Right ventricle myocardium inferior (tissue), 1 donor: ENCODE measurements at regions of chr19 and their contacts with region 1.

Region 1: GRCh38 chr19:53431399-53432087 is at the start of gene ZNF761:
- DNase-seq: peak; percentile 97
- ATAC-seq: peak; percentile 100
- total RNA-seq, gene ZNF761: 3.8 TPM

Region 2: DNA sequence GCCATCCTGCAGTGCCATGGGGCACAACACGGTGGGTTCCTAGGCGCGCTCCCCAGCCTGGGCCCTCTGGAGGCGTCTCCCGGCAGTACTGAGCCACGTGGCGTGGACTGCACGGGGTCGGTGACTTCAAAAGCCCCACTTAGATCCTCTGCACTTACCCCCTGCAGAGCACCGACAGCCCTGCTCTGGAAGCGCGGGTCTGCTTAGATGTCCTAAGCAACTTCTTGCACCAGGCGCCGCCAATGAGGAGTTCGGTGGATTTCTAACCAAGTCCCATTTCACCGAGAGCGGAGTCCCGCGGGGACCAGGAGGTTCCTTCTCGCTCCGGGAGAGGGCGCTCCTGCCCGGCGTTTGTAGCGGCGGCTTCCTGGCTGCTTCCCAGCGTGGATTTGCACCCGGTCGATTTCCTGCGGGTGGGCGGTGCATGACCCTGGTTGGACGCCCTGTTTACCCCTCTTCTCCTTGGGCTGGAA is 123.2 kb before region 1 on chr19:
- intact Hi-C with region 1: no loop called
- DNase-seq: no peak
- ATAC-seq: no peak

Region 3: DNA sequence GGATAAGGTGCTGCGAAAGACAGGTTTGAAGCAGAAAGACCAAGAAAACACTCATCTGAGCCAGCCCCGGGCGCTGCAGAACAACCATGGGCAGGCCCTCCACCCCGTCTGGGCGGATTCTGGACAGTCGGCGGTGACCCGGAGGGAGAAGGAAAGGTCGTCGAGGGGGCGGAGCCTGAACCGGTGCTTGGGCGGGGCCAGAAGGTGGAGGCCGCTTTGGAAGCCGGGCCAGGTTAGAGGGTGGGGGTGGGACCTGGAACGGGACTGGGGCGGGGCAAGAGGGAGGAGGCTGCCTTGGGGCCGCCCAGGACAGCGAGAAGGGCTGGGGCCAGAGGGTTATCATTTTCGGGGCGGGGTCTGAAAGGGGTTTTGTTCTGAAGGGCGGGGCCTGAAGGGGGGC is 41.6 kb before region 1 on chr19:
- intact Hi-C with region 1: no loop called
- DNase-seq: no peak
- ATAC-seq: no peak

Region 4: GRCh38 chr19:53467485-53468262 is 36.1 kb after region 1 on chr19 and contains the start of gene ZNF813:
- intact Hi-C with region 1: loop called (anchors 5 kb)
- DNase-seq: peak; percentile 98
- ATAC-seq: peak; percentile 99
- total RNA-seq, gene ZNF813: 1.1 TPM

Region 5: GRCh38 chr19:53520550-53521372 is 89.2 kb after region 1 on chr19:
- intact Hi-C with region 1: loop called (anchors 5 kb)
- DNase-seq: peak; percentile 96
- ATAC-seq: peak; percentile 100